GM10248 (cell line): ENCODE measurements at regions of chr1 and their contacts with region 1.

Region 1: GRCh38 chr1:238469146-238469631 is 578.5 kb upstream of the ZP4 start:
- DNase-seq: no peak
- CTCF ChIP-seq: no peak

Region 2: DNA sequence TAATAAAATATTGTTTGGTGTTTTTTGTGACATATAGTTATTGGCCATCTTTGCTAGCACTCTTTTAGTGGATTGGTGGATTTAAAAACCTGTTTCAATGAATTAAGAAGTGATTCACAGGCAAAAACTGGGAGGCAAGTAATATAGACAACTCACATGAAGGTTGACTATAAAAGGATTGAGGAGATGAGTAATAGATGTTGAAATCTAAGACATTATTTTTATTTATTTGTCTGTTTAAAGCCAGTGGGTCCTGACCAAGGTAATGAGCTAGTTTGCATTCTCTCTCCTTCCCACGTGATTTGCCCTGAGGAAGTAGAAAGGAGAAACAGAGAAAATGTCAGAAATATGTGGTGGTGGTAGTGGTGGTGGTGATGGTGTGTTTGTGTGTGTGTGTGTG is 227.0 kb before region 1 on chr1:
- CTCF ChIA-PET with region 1: no interaction called
- POLR2A ChIA-PET with region 1: no interaction called
- DNase-seq: no peak
- CTCF ChIP-seq: no peak

Region 3: GRCh38 chr1:238485057-238485911 is 16.1 kb after region 1 on chr1:
- CTCF ChIA-PET with region 1: interaction called, 12 read pairs
- POLR2A ChIA-PET with region 1: no interaction called
- DNase-seq: no peak
- CTCF ChIP-seq: no peak

Region 4: DNA sequence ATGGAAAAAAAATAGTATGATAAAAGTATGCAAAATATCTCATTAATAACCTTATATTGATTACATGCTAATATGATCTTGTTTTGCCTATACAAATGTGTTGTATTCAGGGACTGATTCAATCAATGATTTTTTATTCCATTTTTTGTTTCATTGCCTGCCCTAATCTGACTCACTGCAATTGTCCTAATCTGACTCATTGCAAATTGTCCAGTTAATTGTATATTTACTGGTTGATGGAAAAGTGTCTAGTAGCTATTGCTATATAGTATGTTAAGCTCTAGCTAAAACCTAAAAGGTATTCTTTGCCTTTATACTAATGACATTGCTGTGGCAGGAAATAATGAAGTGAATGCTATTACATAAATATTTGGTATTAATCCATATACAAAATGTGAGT is 150.5 kb after region 1 on chr1:
- CTCF ChIA-PET with region 1: no interaction called
- POLR2A ChIA-PET with region 1: no interaction called
- DNase-seq: no peak
- CTCF ChIP-seq: no peak